Activated CD4-positive, alpha-beta T cell treated with anti-CD3 and anti-CD28 coated beads, Interleukin-2, amount 10 ng/mL, durations not matched to agents 24 days and 14 days (primary cell): ENCODE measurements at regions of chr6 and their contacts with region 1.

Region 1: DNA sequence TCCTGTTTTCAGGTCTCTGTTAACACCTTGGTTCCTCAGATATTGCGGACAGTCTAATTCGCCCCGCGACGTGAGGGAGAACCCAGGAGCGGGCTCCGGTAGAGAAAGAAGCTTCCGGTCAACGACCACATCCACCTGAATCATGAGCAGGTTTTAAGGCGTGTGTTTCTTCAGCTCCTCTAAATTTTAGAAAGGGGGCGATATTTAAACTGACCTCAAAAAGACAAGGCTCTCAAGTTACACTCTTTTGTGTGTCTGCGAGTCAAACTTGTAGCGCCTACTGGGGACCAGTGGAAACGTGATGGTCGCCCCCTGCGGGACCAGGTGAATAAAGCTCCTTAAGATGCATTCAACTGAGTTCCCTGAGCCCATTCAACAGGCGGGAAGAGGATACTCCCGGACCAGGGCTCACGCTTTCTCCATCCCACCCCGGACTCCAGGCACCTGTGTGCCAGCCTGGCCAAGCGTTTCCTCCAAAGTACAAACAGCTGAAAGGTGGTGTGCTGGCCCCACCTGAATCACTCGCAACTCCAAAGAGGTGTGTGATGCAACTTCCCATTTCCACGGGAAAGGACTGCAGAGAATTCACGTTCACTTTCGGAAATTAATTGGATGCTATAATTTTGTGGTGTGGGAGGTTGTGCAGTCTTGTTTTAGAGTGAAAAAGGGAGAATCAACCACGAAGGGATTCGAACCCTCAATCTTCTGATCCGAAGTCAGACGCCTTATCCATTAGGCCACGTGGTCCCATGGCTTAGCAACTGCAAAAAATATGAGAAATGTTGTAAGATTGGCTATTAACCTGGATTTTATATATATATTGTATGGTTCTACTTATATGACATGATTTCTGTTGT is 17.0 kb downstream of the GPX5 start:
- DNase-seq: peak; percentile 84
- H3K4me3 Mint-ChIP-seq: peak overlapping the region; percentile 83
- H3K27ac Mint-ChIP-seq: peak overlapping the region; percentile 48
- H3K4me1 Mint-ChIP-seq: peaks cover 18% of the 10 kb centered on the region
- H3K27me3 Mint-ChIP-seq: peaks cover 63% of the 10 kb centered on the region

Region 2: GRCh38 chr6:28399350-28400121 is 143.1 kb before region 1 on chr6 and contains the start of gene ZSCAN12:
- intact Hi-C with region 1: loop called (anchors 1 kb)
- DNase-seq: peak; percentile 95
- H3K4me3 Mint-ChIP-seq: peak within 1 kb of the TSS; percentile 93
- H3K27ac Mint-ChIP-seq: peak within 1 kb of the TSS; percentile 92
- H3K4me1 Mint-ChIP-seq: peaks cover 49% of the 10 kb centered on the region
- H3K27me3 Mint-ChIP-seq: peaks cover 23% of the 10 kb centered on the region
- total RNA-seq, gene ZSCAN12: 5.8 and 5.9 TPM in 2 replicates

Region 3: DNA sequence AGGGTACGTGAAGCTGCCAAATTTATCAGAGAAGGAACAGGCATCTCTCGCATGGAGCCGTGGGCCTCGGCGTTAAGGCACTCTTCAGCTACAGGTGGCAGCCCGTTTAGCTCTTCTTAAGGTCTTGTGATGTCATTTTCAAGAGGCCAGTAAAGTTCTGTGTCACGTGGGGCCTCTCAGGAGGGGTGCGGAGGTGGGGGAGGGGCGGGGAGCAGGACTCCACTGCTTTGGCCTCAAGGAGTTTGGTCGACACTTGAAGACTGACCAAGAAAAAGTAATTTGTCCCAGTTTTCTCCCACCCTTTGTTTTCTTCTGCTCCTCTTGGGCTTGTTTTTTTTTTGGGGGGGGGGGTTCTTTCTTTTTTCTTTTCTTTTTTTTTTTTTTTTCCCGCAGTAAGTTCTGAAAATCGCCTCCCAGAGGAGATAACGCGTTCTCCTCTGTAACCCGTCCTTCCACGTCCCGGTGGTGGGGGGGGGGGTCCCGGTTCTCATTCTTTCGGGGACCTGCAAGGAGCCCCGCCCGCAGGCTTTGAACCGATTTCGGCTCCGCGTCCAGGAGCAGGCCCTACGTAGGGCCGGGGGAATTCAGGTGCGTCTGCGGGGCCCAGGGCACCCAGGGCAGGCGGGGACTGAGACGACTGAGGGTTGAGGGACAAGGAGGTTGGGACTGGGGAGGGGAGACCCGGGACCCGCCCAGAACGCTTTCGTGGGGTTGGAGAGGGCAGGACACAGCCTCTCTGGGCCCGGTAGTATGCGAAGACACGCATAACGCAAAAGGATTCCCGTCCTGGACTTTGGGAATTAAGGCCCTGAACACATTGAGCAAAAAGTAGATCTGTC is 53.1 kb before region 1 on chr6:
- intact Hi-C with region 1: loop called (anchors 2 kb)
- DNase-seq: peak; percentile 79
- H3K4me3 Mint-ChIP-seq: peak overlapping the region; percentile 77
- H3K27ac Mint-ChIP-seq: peak overlapping the region; percentile 70
- H3K4me1 Mint-ChIP-seq: peaks cover 18% of the 10 kb centered on the region
- H3K27me3 Mint-ChIP-seq: peaks cover 46% of the 10 kb centered on the region

Region 4: DNA sequence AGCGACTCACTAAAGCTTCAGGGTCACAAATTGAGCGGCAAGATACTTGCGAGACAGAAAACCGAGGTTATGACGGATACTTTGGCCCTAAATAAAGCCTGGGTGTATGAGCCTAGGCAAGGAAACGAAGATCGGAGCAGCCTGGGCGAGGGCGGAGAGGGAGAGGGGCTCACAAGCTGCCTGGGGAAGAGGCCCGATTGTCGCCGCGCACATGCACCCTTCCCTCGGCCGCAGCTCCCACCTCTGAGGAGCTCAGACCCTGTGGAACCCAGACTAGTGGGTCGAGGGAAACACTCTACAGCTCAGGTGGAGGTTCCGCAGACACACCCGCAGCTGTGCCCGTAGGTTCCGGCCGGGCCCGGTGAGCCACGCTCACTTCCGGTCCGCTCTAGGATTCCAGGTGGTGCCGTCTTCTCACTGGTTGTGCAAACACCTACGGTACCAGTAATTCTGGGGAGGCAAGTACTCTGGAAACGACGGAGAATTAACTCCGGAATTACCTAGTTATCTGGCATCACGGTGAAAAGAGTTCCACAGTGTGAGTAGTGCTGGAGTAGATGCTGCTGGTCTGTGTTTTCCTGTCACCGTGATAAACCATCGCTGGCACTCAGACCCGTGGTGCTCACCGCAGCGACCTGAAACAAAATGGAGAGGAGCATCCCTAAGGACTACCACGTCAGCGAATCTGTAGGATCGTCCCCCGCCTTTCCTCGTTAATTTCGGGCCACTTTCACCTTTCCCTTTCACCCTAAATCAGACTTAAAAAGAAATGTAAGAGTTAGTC is 44.5 kb after region 1 on chr6:
- intact Hi-C with region 1: loop called (anchors 1 kb)
- DNase-seq: peak; percentile 87
- H3K4me3 Mint-ChIP-seq: peak overlapping the region; percentile 85
- H3K27ac Mint-ChIP-seq: peak overlapping the region; percentile 38
- H3K4me1 Mint-ChIP-seq: peaks cover 30% of the 10 kb centered on the region
- H3K27me3 Mint-ChIP-seq: peaks cover 63% of the 10 kb centered on the region

Region 5: DNA sequence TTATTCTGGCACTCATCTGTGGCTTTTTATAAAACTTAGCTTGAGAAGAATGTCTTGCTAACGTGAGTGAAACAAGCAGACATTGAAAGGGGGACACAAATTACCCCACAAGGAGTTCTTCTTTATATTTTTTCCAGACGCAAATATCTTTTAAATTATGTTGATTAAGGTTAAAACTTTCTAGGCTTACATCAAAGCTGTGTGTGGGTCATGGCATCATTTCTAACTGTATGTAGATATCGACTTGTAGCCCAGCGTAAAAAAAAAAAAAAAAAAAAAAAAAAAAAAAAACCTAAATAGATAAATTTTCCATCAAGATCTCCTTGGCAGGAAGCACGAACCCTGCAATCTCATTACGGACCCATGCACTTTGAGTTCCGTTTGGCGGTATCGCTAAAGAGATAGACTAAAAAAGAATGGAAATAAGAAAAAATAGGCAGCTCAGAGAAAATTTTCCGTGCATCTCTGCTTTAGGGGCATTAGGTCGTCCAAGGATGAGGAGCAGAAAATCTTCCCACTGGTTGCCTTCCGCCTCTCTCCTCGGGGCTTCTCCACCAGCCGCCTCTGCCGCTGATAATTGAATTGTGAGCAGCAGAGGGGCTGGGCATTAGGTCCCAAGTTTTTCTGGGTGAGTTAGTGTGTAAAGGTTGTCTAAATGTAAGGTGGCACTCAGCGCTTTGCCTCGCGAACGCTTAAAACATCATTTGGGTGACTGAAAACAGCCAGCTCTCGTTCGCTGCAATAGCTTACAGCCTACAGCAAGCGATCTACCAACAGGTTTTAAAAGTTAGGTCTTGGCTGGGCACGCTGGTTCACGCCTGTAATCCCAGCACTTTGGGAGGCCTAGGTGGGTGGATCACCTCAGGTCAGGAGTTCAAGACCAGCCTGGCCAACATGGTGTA is 187.1 kb after region 1 on chr6:
- intact Hi-C with region 1: no loop called
- DNase-seq: no peak
- H3K4me3 Mint-ChIP-seq: peak overlapping the region; percentile 95
- H3K27ac Mint-ChIP-seq: peak overlapping the region; percentile 2
- H3K4me1 Mint-ChIP-seq: peaks cover 16% of the 10 kb centered on the region
- H3K27me3 Mint-ChIP-seq: peaks cover 75% of the 10 kb centered on the region

Region 6: DNA sequence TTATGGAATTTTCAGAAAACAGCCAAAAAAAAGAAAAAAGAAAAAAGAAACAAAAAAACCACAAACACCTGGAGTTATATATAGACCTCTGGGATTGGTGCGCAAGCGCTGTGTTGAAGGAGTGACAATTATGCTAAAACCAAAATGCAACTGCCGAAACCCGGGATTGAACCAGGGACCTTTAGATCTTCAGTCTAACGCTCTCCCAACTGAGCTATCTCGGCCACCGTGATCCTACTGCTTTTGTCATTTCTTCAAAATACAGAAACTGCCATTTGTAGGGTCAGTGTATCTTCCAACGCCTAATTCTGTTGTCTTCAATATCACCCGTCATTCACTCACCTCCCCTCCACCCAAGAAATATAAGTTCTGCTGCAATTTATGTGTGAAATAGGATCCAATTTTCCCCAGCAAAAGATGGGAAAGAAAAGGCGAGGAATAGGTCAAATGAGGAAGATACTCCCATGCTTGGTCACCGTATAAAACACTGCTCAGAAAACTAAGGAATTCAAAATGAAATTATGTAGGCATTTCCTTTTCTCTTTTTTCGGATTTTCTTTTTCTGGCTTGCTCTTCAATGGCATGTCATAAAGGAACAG is 265.1 kb after region 1 on chr6:
- intact Hi-C with region 1: no loop called
- DNase-seq: peak; percentile 67
- H3K4me3 Mint-ChIP-seq: no peak overlapping the region
- H3K27ac Mint-ChIP-seq: peak overlapping the region; percentile 10
- H3K4me1 Mint-ChIP-seq: peaks cover 18% of the 10 kb centered on the region
- H3K27me3 Mint-ChIP-seq: peaks cover 74% of the 10 kb centered on the region